Heart right ventricle (tissue), 16 donors: ENCODE measurements at regions of chr12 and their contacts with region 1.

Region 1: DNA sequence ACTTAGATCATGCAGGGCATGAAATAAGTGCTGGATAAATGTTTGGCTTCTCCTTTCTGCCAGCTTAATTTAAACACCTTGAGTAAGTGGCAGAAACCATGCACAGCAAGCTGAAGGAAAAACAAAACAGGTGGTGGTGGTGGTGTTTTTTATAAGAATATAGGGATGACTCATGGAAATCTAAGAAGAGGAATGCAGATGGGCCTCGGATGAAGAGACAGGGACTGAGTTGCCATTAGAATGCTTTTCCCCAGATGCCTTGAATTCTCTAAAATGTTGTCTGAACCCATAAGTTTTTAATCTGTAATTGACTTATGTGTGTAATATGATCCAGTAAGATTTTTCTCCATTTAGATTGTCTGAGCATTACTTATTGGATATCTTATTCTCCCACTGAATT is 93.1 kb upstream of the ZDHHC17 start:
- DNase-seq: no peak
- ATAC-seq: no peak
- H3K4me3 ChIP-seq: no peak overlapping the region
- H3K27ac ChIP-seq: no peak overlapping the region
- H3K4me1 ChIP-seq: peaks cover 0 to 7% (median 0%) of the 10 kb centered on the region in 9 donors
- H3K27me3 ChIP-seq: no peaks in the 10 kb centered on the region
- CTCF ChIP-seq: no peak

Region 2: DNA sequence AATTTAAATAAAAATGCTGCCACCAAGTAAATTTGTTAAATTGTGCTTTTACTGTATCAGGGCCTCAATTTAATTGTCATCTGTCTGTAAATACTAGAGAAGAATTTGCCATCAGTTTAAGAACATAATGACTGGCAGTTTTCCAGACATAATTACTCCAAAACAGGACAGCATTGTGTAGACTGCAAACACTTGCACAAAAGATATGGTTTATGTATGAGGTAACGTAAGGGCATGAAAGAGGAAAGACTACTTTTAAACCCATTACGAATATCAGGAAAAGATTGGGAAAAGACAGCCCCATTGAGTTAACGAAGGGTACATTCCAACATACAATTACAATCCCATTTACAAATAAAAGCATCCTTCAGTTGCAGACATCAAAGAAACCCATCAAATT is 1099.6 kb before region 1 on chr12:
- intact Hi-C with region 1: no loop called
- DNase-seq: no peak
- ATAC-seq: peak in 3 of 8 donors; percentile 33 to 47 (median 42)
- H3K4me3 ChIP-seq: no peak overlapping the region
- H3K27ac ChIP-seq: peak overlapping the region in 2 of 10 donors; percentile 5 to 25
- H3K4me1 ChIP-seq: peaks cover 0 to 14% (median 0%) of the 10 kb centered on the region in 9 donors
- H3K27me3 ChIP-seq: no peaks in the 10 kb centered on the region
- CTCF ChIP-seq: no peak

Region 3: GRCh38 chr12:76694369-76694768 is 23.6 kb after region 1 on chr12:
- intact Hi-C with region 1: loop called in 1 of 10 experiments (anchors 1 kb)
- DNase-seq: no peak
- ATAC-seq: no peak
- H3K4me3 ChIP-seq: no peak overlapping the region
- H3K27ac ChIP-seq: no peak overlapping the region
- H3K4me1 ChIP-seq: peaks cover 0 to 4% (median 0%) of the 10 kb centered on the region in 9 donors
- H3K27me3 ChIP-seq: no peaks in the 10 kb centered on the region
- CTCF ChIP-seq: no peak